ENCODE measurements at regions of chrX and their contacts with region 1.

Region 1: GRCh38 chrX:139750390-139750789 is 42.4 kb upstream of the MCF2 start:
- DNase-seq: no peak
- H3K4me3 ChIP-seq: no peak overlapping the region
- H3K27ac ChIP-seq: no peak overlapping the region
- H3K4me1 ChIP-seq: no peaks in the 10 kb centered on the region
- H3K27me3 ChIP-seq: no peaks in the 10 kb centered on the region
- CTCF ChIP-seq: no peak

Region 2: GRCh38 chrX:139566981-139567380 is 183.4 kb before region 1 on chrX:
- CTCF ChIA-PET with region 1: no interaction called
- POLR2A ChIA-PET with region 1: no interaction called
- intact Hi-C with region 1: loop called (anchors 5 kb)
- DNase-seq: peak; percentile 76
- H3K4me3 ChIP-seq: no peak overlapping the region
- H3K27ac ChIP-seq: peak overlapping the region; percentile 78
- H3K4me1 ChIP-seq: peaks cover 5% of the 10 kb centered on the region
- H3K27me3 ChIP-seq: no peaks in the 10 kb centered on the region
- CTCF ChIP-seq: no peak

Region 3: GRCh38 chrX:139766545-139766983 is 16.2 kb after region 1 on chrX:
- CTCF ChIA-PET with region 1: no interaction called
- POLR2A ChIA-PET with region 1: no interaction called
- intact Hi-C with region 1: no loop called
- DNase-seq: no peak
- H3K4me3 ChIP-seq: no peak overlapping the region
- H3K27ac ChIP-seq: no peak overlapping the region
- H3K4me1 ChIP-seq: no peaks in the 10 kb centered on the region
- H3K27me3 ChIP-seq: no peaks in the 10 kb centered on the region
- CTCF ChIP-seq: no peak

Measured in A673 (cell line).